ENCODE measurements at regions of chr3 and their contacts with region 1.

Region 1: GRCh38 chr3:72996473-72997333 is at the start of gene PPP4R2:
- DNase-seq: peak; percentile 91
- CTCF ChIP-seq: peak; percentile 19

Region 2: DNA sequence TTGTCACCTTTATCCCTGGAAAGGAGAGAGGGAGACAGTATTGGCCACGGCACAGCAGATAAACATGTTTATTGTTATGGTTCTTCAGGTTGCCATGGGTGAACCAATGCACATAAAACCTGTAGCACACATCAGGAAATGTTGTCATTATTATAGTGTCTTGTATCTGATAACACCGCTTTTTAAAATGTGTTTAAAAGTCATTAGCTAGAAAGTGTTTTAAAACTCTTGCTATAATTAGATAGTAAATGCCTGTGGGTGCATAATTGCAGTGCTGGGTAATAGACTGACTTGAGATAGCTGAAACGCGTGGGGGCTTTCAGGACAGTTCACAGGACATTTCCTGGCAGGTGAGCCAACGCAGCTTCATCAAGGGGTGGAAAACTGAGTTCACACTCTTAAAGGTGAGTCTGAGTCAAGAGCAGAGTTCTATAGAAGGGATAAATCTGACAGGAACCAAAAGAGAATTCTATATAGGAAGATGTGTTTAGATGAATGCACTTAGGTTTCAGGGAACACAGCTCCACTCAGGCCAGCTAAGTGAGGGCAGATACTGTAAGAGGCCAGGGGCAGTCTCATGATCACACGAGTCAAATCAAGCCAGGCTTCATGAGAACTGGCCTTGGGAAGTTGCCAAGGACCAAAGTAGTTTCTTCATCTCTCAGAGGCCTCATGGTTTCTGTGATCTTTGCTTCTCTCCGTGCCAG is 35.7 kb before region 1 on chr3:
- CTCF ChIA-PET with region 1: no interaction called
- POLR2A ChIA-PET with region 1: no interaction called
- DNase-seq: no peak
- CTCF ChIP-seq: no peak

Region 3: DNA sequence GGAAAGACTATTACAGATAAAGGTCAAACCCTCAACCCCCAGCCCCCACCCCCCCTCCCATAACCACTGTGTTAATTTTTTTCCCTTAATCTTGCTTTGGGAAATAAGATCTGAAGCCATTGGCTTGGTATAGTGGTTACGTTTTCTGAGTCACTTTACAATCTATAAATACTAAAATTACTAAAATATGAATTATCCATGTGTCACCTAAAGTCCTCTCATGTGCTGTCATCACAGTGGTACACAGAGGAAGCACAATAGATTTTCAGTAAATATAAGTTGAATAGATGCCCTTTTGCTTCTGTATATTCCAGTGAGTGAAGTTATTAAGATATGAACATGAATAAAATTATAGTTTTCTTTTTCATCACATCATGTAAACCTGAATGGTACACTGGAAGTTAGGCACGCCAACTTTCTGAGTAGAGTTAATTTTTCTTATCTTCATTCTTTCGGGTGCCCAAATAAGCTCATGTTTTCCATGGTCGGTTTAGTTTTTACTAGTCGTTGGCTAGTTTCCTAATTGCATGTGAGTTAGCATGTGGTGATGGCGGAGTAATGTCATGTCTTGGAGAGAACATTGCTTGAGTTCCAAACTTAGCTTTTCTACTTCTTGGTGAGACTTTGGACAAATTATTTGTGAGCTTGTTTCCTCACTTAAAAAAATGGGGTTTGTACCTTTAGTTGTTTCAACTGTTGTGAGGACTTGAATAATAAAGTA is 11.4 kb after region 1 on chr3:
- CTCF ChIA-PET with region 1: interaction called, 31 read pairs
- POLR2A ChIA-PET with region 1: no interaction called
- DNase-seq: no peak
- CTCF ChIP-seq: no peak

Region 4: GRCh38 chr3:73070675-73071575 is 74.2 kb after region 1 on chr3:
- CTCF ChIA-PET with region 1: no interaction called
- POLR2A ChIA-PET with region 1: no interaction called
- DNase-seq: no peak
- CTCF ChIP-seq: no peak